CD8-positive, alpha-beta memory T cell (primary cell): ENCODE measurements at regions of chr6 and their contacts with region 1.

Region 1: GRCh38 chr6:42652024-42652746 is 70.2 kb downstream of the PRPH2 start:
- DNase-seq: no peak
- H3K4me3 ChIP-seq: no peak overlapping the region
- H3K4me3 Mint-ChIP-seq: no peak overlapping the region
- H3K27ac ChIP-seq: no peak overlapping the region
- H3K27ac Mint-ChIP-seq: peak overlapping the region in 4 of 8 donors; percentile 17 to 67 (median 56)
- H3K4me1 ChIP-seq: no peaks in the 10 kb centered on the region
- H3K4me1 Mint-ChIP-seq: no peaks in the 10 kb centered on the region
- H3K27me3 ChIP-seq: no peaks in the 10 kb centered on the region
- H3K27me3 Mint-ChIP-seq: no peaks in the 10 kb centered on the region

Region 2: DNA sequence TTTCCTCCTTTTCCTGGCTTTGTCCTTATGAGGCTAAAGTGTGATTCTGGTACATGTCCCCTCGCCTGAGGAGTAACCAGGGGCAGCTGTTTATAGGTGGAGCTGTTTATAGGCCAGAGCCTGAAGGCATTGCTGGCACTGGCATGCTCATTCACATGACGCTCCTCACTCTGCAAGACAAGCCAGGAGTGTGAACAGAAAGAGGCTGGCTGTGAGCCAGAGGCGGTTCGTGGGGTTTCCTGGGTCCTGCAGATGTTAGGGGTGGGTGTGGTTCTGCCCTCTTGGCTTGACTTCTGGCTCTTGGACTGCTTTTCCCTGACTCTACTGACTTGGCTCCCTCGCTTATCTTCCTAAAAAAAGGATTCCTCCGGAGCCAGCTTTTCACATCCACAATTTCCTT is 1026.7 kb before region 1 on chr6:
- CTCF ChIA-PET with region 1: no interaction called
- POLR2A ChIA-PET with region 1: no interaction called
- DNase-seq: peak in 1 of 5 donors; percentile 24
- H3K4me3 ChIP-seq: no peak overlapping the region
- H3K4me3 Mint-ChIP-seq: peak overlapping the region in 1 of 7 donors; percentile 9
- H3K27ac ChIP-seq: no peak overlapping the region
- H3K27ac Mint-ChIP-seq: peak overlapping the region in 2 of 8 donors; percentile 41 to 77
- H3K4me1 ChIP-seq: peaks cover 9% of the 10 kb centered on the region
- H3K4me1 Mint-ChIP-seq: peaks cover 13 to 14% (median 13%) of the 10 kb centered on the region in 3 donors
- H3K27me3 ChIP-seq: peaks cover 5% of the 10 kb centered on the region
- H3K27me3 Mint-ChIP-seq: peaks cover 15 to 41% of the 10 kb centered on the region in 2 donors

Region 3: GRCh38 chr6:42704241-42704936 is 52.2 kb after region 1 on chr6:
- CTCF ChIA-PET with region 1: no interaction called
- POLR2A ChIA-PET with region 1: no interaction called
- DNase-seq: no peak
- H3K4me3 ChIP-seq: no peak overlapping the region
- H3K4me3 Mint-ChIP-seq: no peak overlapping the region
- H3K27ac ChIP-seq: no peak overlapping the region
- H3K27ac Mint-ChIP-seq: no peak overlapping the region
- H3K4me1 ChIP-seq: no peaks in the 10 kb centered on the region
- H3K4me1 Mint-ChIP-seq: no peaks in the 10 kb centered on the region
- H3K27me3 ChIP-seq: no peaks in the 10 kb centered on the region
- H3K27me3 Mint-ChIP-seq: peaks cover 0 to 5% of the 10 kb centered on the region in 2 donors

Region 4: DNA sequence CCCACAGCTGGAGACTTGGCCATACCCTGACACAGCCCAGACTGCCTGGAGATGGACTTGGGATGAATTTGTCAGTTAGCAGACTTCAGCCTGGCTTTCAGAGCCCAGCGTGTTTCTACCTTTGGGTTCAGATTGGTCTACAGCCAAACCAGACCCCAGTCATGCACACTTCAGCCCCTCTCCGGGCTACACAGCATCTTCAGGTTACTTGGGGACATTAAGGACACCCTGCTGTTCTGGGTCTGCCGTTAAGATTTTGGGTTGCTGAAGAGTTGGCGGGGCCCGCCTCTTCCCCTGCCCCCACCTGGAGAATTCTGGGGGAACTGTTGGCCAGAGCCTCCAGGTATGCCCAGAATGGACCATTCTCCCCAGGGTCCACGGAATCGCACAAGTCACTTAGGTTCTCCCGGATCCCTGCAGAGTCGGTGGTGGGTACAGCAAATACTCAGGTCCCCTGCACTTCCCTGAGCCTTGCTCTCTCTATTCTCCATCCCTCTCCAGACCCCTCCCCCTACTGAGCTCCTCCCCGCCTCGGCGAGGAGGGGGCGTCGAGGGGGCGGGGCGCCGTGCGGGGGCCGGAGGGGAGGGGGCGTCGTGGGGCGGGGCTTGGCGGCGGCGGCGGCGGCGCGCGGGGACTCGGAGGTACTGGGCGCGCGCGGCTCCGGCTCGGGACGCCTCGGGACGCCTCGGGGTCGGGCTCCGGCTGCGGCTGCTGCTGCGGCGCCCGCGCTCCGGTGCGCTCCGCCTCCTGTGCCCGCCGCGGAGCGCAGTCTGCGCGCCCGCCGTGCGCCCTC is 423.7 kb after region 1 on chr6 and contains the start of gene PTK7:
- CTCF ChIA-PET with region 1: no interaction called
- POLR2A ChIA-PET with region 1: interaction called, 13 read pairs
- DNase-seq: no peak
- H3K4me3 ChIP-seq: peak within 1 kb of the TSS; percentile 49
- H3K4me3 Mint-ChIP-seq: peak within 1 kb of the TSS; percentile 42 to 79 (median 62)
- H3K27ac ChIP-seq: no peak within 1 kb of the TSS
- H3K27ac Mint-ChIP-seq: no peak within 1 kb of the TSS
- H3K4me1 ChIP-seq: peaks cover 7% of the 10 kb centered on the region
- H3K4me1 Mint-ChIP-seq: peaks cover 0 to 20% (median 8%) of the 10 kb centered on the region in 3 donors
- H3K27me3 ChIP-seq: peaks cover 9% of the 10 kb centered on the region
- H3K27me3 Mint-ChIP-seq: peaks cover 20 to 21% of the 10 kb centered on the region in 2 donors
- total RNA-seq, gene PTK7: 1.6 TPM